Heart left ventricle (tissue), 16 donors: ENCODE measurements at regions of chr10 and their contacts with region 1.

Region 1: GRCh38 chr10:101889256-101890210 is 45.9 kb upstream of the KCNIP2 start:
- DNase-seq: peak; percentile 64 to 79 (median 69)
- ATAC-seq: peak in 2 of 4 donors; percentile 46 to 54
- H3K4me3 ChIP-seq: no peak overlapping the region
- H3K27ac ChIP-seq: peak overlapping the region in 6 of 12 donors; percentile 5 to 75 (median 27)
- H3K4me1 ChIP-seq: peaks cover 0 to 69% (median 9%) of the 10 kb centered on the region in 12 donors
- H3K27me3 ChIP-seq: no peaks in the 10 kb centered on the region
- CTCF ChIP-seq: peak; percentile 60 to 87 (median 78)
- POLR2A ChIP-seq: no peak

Region 2: GRCh38 chr10:101797403-101798059 is 92.0 kb before region 1 on chr10:
- intact Hi-C with region 1: no loop called
- DNase-seq: no peak
- ATAC-seq: peak in 1 of 4 donors; percentile 10
- H3K4me3 ChIP-seq: no peak overlapping the region
- H3K27ac ChIP-seq: no peak overlapping the region
- H3K4me1 ChIP-seq: peaks cover 0 to 16% (median 3%) of the 10 kb centered on the region in 12 donors
- H3K27me3 ChIP-seq: no peaks in the 10 kb centered on the region
- CTCF ChIP-seq: no peak
- POLR2A ChIP-seq: no peak

Region 3: DNA sequence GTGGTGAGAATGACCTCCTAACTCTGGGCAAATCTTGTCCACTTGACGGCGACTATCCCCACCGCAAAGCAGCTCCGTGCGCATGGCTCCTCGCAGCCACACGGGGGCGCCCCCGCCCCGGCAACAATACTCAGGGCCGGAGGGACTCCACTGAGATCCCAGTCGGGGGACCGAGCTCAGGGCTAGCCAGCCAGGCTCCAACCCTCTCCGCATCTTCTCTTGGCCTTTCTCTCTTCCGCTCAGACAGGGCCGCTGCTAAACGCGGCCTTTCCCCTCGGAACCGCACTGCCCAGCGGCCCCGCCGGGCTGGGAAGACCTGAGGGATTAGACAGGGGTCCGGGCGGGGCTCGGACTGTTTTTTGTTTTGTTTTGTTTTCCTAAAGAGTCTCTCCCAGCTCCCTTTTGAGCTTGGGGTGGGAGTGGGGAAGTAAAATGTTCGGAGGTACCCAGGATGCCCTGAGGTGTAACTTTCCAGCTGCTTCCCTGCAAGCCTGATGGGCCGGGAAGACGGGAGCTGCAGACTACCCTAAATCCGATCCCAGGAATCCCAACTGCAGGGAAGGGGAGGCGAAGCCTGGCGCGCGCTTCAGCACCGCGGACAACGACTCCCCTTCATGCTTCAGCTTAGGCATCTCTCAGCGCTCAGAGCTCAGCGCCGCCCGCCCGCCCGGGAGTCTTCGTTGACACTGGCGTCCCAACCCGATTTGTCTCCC is 48.6 kb before region 1 on chr10:
- intact Hi-C with region 1: loop called in 6 of 10 experiments (anchors 2 to 5 kb)
- DNase-seq: peak; percentile 79 to 89 (median 83)
- ATAC-seq: peak; percentile 70 to 88 (median 85)
- H3K4me3 ChIP-seq: peak overlapping the region; percentile 1 to 59 (median 46)
- H3K27ac ChIP-seq: peak overlapping the region in 2 of 12 donors; percentile 22 to 50
- H3K4me1 ChIP-seq: peaks cover 0 to 75% (median 29%) of the 10 kb centered on the region in 12 donors
- H3K27me3 ChIP-seq: no peaks in the 10 kb centered on the region
- CTCF ChIP-seq: peak; percentile 86 to 96 (median 91)
- POLR2A ChIP-seq: no peak

Region 4: DNA sequence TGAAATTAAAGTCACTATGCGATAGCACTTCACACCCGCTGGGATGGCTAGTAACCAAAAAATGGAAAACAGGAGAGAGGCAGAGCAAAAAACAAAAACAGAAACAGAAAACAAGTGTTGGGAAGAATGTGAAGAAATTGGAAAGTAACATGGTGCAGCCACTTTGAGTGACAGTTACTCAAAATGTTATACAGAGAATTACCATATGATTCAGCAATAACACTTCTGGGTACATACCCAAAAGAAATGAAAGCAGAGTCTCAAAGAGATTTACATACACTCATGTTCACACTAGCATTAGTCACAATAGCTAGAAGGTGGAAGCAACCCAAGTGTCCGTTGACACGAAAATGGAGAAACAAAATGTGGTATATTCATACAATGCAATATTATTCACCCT is 42.6 kb after region 1 on chr10:
- intact Hi-C with region 1: no loop called
- DNase-seq: no peak
- ATAC-seq: no peak
- H3K4me3 ChIP-seq: no peak overlapping the region
- H3K27ac ChIP-seq: no peak overlapping the region
- H3K4me1 ChIP-seq: peaks cover 0 to 26% (median 3%) of the 10 kb centered on the region in 12 donors
- H3K27me3 ChIP-seq: no peaks in the 10 kb centered on the region
- CTCF ChIP-seq: no peak
- POLR2A ChIP-seq: no peak

Region 5: GRCh38 chr10:101961591-101962498 is 72.3 kb after region 1 on chr10:
- intact Hi-C with region 1: loop called in 5 of 10 experiments (anchors 2 to 10 kb)
- DNase-seq: peak in 4 of 5 donors; percentile 57 to 82 (median 66)
- ATAC-seq: peak; percentile 88 to 93 (median 92)
- H3K4me3 ChIP-seq: no peak overlapping the region
- H3K27ac ChIP-seq: peak overlapping the region; percentile 73 to 95 (median 87)
- H3K4me1 ChIP-seq: peaks cover 0 to 53% (median 12%) of the 10 kb centered on the region in 12 donors
- H3K27me3 ChIP-seq: no peaks in the 10 kb centered on the region
- CTCF ChIP-seq: no peak
- POLR2A ChIP-seq: no peak

Region 6: GRCh38 chr10:101968940-101969321 is 79.4 kb after region 1 on chr10:
- intact Hi-C with region 1: loop called in 5 of 10 experiments (anchors 2 to 10 kb)
- DNase-seq: no peak
- ATAC-seq: no peak
- H3K4me3 ChIP-seq: peak overlapping the region in 1 of 12 donors; percentile 9
- H3K27ac ChIP-seq: peak overlapping the region; percentile 34 to 91 (median 62)
- H3K4me1 ChIP-seq: peaks cover 5 to 69% (median 25%) of the 10 kb centered on the region in 12 donors
- H3K27me3 ChIP-seq: no peaks in the 10 kb centered on the region
- CTCF ChIP-seq: no peak
- POLR2A ChIP-seq: no peak

Region 7: DNA sequence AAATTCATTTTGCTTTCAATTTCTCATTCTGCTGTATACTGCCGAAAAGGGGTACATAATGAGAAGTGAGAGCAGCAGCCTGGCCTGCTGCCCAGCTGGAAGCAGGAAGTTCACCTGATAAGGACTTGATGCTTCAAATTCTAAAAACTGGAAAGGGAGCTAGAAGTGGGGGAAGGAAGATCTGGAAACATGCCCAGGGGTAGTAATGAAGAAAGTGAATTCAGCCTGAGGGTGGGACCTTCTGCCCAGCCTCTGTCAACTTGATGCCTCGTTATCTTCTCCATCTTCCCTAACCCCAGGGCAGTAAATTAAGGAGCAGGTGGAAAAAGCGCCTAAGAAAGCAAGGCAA is 97.1 kb after region 1 on chr10:
- intact Hi-C with region 1: loop called in 1 of 10 experiments (anchors 5 kb)
- DNase-seq: peak in 4 of 5 donors; percentile 26 to 56 (median 41)
- ATAC-seq: peak in 1 of 4 donors; percentile 70
- H3K4me3 ChIP-seq: no peak overlapping the region
- H3K27ac ChIP-seq: peak overlapping the region in 2 of 12 donors; percentile 32 to 72
- H3K4me1 ChIP-seq: peaks cover 0 to 22% (median 12%) of the 10 kb centered on the region in 12 donors
- H3K27me3 ChIP-seq: no peaks in the 10 kb centered on the region
- CTCF ChIP-seq: no peak
- POLR2A ChIP-seq: no peak

Region 8: DNA sequence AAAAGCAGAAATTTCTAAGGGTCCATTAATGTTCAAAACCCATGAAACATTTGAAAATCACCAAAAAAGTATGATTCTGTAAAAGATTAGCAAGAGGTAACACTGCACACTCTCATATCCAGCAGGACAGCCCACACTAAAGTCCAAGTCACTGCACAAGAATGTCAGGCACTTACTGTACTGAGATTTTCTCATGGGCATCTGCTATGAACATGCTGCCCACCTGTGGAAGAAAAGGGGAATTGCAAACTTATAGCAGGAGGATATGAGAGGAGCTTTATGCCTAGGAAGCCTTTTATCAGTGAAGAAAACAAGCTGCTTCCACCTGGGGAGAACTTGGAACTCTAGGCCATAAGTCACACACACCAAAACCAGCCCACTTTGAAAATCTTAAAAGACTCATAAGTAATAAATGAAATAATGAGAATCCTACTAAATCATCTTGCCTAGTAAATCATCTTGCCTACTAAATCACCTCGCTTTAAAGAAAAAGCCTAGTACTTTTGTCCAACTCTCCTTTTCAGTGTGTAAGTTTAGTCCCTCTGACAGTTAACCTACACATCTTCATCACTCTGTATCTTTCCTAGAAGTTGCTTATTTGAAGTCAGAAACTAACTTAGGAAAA is 120.4 kb after region 1 on chr10:
- intact Hi-C with region 1: loop called in 9 of 10 experiments (anchors 2 to 5 kb)
- DNase-seq: peak in 4 of 5 donors; percentile 33 to 53 (median 44)
- ATAC-seq: peak; percentile 83 to 97 (median 96)
- H3K4me3 ChIP-seq: no peak overlapping the region
- H3K27ac ChIP-seq: no peak overlapping the region
- H3K4me1 ChIP-seq: peaks cover 0 to 12% (median 1%) of the 10 kb centered on the region in 12 donors
- H3K27me3 ChIP-seq: no peaks in the 10 kb centered on the region
- CTCF ChIP-seq: peak; percentile 73 to 93 (median 90)
- POLR2A ChIP-seq: no peak

Region 9: GRCh38 chr10:102072673-102073527 is 183.4 kb after region 1 on chr10:
- intact Hi-C with region 1: loop called in 1 of 10 experiments (anchors 10 kb)
- DNase-seq: peak; percentile 66 to 82 (median 72)
- ATAC-seq: peak; percentile 62 to 90 (median 78)
- H3K4me3 ChIP-seq: no peak overlapping the region
- H3K27ac ChIP-seq: no peak overlapping the region
- H3K4me1 ChIP-seq: peaks cover 0 to 20% (median 8%) of the 10 kb centered on the region in 12 donors
- H3K27me3 ChIP-seq: no peaks in the 10 kb centered on the region
- CTCF ChIP-seq: peak; percentile 79 to 96 (median 92)
- POLR2A ChIP-seq: no peak

Region 10: DNA sequence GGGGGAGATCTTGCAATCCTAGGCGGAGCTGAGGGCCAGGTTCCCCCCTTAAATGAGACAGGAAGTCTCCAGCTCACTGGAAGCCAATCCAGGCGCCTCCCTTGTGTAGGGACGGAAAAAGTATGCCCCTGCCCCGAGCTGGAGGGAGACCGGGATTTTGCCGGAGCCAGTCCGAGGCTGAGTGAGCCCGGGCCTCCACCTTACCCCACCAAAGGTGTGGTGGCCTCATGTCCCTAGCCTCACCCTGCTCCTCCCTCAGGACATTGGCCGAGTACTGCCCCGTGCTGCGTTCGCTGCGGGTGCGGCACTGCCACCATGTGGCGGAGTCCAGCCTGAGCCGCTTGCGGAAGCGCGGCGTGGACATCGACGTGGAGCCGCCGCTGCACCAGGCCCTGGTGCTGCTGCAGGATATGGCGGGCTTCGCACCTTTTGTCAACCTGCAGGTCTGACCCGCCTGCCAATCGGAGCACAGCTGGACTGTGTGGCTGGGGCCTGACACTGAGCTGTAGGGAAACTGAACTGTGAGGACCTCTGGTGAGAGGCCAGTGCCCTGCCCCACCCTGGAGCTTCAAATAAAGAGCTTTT is 533.1 kb after region 1 on chr10:
- intact Hi-C with region 1: no loop called
- DNase-seq: peak; percentile 78 to 92 (median 83)
- ATAC-seq: peak; percentile 37 to 70 (median 63)
- H3K4me3 ChIP-seq: peak overlapping the region; percentile 52 to 99 (median 88)
- H3K27ac ChIP-seq: peak overlapping the region in 11 of 12 donors; percentile 80 to 96 (median 91)
- H3K4me1 ChIP-seq: peaks cover 6 to 45% (median 28%) of the 10 kb centered on the region in 12 donors
- H3K27me3 ChIP-seq: peaks cover 0 to 17% (median 7%) of the 10 kb centered on the region in 9 donors
- CTCF ChIP-seq: peak; percentile 66 to 91 (median 78)
- POLR2A ChIP-seq: peak in 1 of 2 donors; percentile 20